Right lobe of liver (tissue), 6 donors: ENCODE measurements at regions of chr6 and their contacts with region 1.

Region 1: DNA sequence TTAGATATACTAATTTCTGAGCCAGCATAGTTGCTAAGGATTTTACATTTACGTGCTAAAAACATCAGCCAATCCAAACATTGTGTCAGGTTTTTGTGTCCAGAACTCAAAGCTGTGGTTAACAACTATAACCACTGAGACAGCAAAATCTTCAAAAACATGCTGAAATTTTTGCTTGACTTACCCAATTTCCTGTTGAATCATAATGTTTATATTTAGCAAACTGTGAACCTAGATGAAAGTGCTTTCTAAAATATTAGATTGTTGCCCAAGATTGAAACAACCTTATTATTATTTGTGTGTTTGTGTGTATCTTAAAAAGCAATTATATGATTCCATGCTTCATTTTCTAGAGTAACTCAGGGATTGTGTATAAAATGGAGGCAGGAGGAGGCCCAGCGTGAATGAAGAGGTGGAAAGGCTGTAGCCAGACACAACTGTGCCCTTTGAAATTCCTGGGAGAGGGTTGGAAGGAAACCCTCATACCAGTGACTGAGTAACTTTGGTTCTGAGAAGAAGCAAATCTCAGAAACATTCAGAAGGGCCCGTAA is 48.0 kb downstream of the ARMC2 start:
- DNase-seq: no peak
- ATAC-seq: peak in 3 of 4 donors; percentile 20 to 48 (median 39)
- H3K4me3 ChIP-seq: no peak overlapping the region
- H3K27ac ChIP-seq: peak overlapping the region in 2 of 3 donors; percentile 35 to 36
- H3K4me1 ChIP-seq: peaks cover 0 to 30% (median 0%) of the 10 kb centered on the region in 4 donors
- H3K27me3 ChIP-seq: no peaks in the 10 kb centered on the region
- CTCF ChIP-seq: no peak
- POLR2A ChIP-seq: no peak

Region 2: DNA sequence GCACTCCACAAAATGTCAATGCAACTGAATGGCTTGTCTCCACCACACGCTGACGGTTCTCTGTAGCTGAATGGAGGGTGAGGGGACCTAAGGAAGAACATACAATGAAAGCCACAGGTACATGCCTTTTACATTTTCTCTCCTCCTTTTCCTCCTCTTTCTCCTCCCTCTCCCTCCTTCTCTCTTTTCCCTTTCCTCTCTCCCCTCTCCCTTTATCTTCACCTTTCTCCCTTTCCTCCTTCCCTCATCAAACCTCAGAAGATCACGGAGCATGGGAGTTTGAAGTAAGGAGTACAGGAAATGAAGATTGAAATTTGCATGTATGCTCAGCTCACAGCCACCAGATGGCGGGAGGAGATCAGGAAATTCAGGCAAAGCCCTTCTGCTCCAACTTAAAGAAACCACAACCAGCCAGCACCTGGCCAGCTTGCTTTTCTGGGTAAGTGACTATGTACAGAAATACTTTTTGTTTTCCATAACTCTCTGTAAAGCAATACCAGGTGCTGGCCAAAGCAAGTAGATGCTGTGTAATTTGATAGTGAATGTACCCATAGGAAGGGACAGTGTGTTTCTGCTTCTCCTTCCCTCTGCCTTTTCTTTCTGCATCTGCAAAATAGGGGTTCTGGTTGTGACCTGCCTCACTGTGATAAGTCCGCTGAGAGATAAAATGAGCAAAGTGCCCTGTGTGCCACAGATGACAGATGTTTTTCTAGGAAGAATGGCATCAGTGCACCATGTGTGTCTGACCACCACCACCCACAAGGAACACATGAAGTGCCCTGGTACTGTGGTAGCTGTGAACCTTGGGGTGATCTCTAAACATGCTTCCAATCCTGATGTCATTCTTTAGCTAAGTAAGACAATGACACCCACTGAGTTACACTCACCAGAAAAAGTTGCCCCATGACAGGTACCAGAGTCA is 354.1 kb before region 1 on chr6:
- intact Hi-C with region 1: loop called in 1 of 2 experiments (anchors 10 kb)
- DNase-seq: peak; percentile 57 to 71 (median 64)
- ATAC-seq: peak; percentile 93 to 97 (median 94)
- H3K4me3 ChIP-seq: no peak overlapping the region
- H3K27ac ChIP-seq: no peak overlapping the region
- H3K4me1 ChIP-seq: no peaks in the 10 kb centered on the region
- H3K27me3 ChIP-seq: no peaks in the 10 kb centered on the region
- CTCF ChIP-seq: peak; percentile 80 to 96 (median 83)
- POLR2A ChIP-seq: no peak